Calu3 (cell line): ENCODE measurements at regions of chr7 and their contacts with region 1.

Region 1: GRCh38 chr7:13581097-13581496 is 408.4 kb downstream of the ETV1 start:
- DNase-seq: no peak
- H3K4me3 Mint-ChIP-seq: no peak overlapping the region
- H3K27ac Mint-ChIP-seq: no peak overlapping the region
- H3K4me1 Mint-ChIP-seq: no peaks in the 10 kb centered on the region
- H3K27me3 Mint-ChIP-seq: no peaks in the 10 kb centered on the region
- CTCF ChIP-seq: no peak

Region 2: GRCh38 chr7:11795231-11795630 is 1785.9 kb before region 1 on chr7:
- CTCF ChIA-PET with region 1: no interaction called
- intact Hi-C with region 1: loop called (anchors 5 kb)
- DNase-seq: no peak
- H3K4me3 Mint-ChIP-seq: no peak overlapping the region
- H3K27ac Mint-ChIP-seq: no peak overlapping the region
- H3K4me1 Mint-ChIP-seq: no peaks in the 10 kb centered on the region
- H3K27me3 Mint-ChIP-seq: no peaks in the 10 kb centered on the region
- CTCF ChIP-seq: no peak

Region 3: DNA sequence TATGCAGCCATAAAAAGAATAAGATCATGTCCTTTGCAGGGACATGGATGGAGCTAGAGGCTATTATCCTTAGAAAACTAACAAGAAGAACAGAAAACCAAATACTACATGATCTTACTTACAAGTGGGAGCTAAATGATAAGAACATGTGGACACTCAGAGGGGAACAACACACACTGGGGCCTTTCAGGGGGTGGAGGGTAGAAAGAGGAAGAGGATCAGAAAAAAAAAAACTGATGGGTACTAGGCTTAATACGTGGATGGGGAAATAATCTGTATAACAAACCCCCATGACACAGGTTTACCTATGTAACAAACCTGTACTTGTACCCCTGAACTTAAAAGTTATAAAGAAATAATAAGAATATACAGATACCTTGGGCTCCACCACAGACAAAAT is 379.5 kb before region 1 on chr7:
- CTCF ChIA-PET with region 1: no interaction called
- intact Hi-C with region 1: no loop called
- DNase-seq: no peak
- H3K4me3 Mint-ChIP-seq: no peak overlapping the region
- H3K27ac Mint-ChIP-seq: no peak overlapping the region
- H3K4me1 Mint-ChIP-seq: no peaks in the 10 kb centered on the region
- H3K27me3 Mint-ChIP-seq: no peaks in the 10 kb centered on the region
- CTCF ChIP-seq: no peak

Region 4: DNA sequence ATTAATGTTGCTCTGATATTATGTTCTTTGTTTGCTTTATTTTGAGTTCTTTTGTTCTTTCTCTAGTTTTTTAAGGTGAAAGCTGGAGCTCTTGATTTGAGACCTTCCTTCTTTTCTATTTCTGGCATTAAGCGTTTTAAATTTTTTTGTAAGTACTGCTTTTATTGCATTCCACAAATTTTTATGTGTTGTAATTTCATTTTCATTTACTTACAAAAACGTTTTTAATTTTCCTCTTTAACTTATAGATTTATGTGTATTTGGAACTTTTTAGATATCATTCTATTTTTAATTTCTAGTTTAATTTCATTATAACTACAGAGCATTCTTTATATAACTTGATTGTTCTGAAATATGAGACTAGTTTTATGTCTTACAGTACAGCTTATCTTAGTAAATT is 12.8 kb after region 1 on chr7:
- CTCF ChIA-PET with region 1: no interaction called
- intact Hi-C with region 1: loop called (anchors 1 kb)
- DNase-seq: no peak
- H3K4me3 Mint-ChIP-seq: no peak overlapping the region
- H3K27ac Mint-ChIP-seq: no peak overlapping the region
- H3K4me1 Mint-ChIP-seq: no peaks in the 10 kb centered on the region
- H3K27me3 Mint-ChIP-seq: no peaks in the 10 kb centered on the region
- CTCF ChIP-seq: no peak